CD4-positive, alpha-beta T cell (primary cell): ENCODE measurements at regions of chr17 and their contacts with region 1.

Region 1: DNA sequence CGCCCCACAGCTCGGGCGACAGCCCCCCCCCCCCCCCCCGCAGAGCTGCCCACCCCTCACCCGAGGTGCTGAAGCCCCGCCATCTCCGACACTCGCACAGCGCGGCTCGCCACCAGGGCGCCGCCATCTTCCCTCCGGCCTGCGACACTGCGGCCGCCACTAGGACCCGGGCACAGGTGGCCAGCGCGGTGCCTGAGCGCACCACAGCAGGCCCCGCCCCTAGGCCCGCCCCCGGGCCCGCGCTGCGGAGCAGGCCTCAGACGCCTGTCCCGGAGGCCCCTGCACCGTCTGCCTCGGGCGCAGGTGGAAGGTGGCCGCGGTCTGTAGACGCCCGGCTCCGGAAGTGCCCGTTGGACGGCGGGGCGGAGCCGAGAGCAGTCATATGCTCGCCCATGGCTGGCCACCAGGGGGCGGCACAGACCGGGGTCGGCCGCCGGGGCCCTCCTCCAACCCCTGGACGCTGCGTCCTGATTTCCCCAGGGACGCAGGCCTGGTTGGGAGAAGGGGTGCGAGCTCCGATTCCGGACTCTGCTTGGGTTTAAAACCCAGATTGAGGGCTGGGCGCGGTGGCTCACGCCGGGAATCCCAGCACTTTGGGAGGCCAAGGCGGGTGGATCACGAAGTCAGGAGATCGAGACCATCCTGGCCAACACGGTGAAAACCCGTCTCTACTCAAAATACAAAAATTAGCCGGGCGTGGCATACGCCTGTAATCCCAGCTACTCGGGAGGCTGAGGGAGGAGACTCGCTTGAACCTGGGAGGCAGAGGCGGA is at the start of gene MRPL38:
- DNase-seq: peak; percentile 82 to 97 (median 92)
- ATAC-seq: peak; percentile 95
- H3K4me3 ChIP-seq: peak within 1 kb of the TSS; percentile 82
- H3K4me3 Mint-ChIP-seq: peak within 1 kb of the TSS; percentile 94
- H3K27ac ChIP-seq: peak within 1 kb of the TSS; percentile 73 to 76
- H3K27ac Mint-ChIP-seq: peak within 1 kb of the TSS; percentile 85
- H3K4me1 ChIP-seq: peaks cover 25% of the 10 kb centered on the region
- H3K4me1 Mint-ChIP-seq: no peaks in the 10 kb centered on the region
- H3K27me3 ChIP-seq: no peaks in the 10 kb centered on the region
- H3K27me3 Mint-ChIP-seq: no peaks in the 10 kb centered on the region
- CTCF ChIP-seq: peak; percentile 99
- total RNA-seq, gene MRPL38: 146 to 147 TPM

Region 2: DNA sequence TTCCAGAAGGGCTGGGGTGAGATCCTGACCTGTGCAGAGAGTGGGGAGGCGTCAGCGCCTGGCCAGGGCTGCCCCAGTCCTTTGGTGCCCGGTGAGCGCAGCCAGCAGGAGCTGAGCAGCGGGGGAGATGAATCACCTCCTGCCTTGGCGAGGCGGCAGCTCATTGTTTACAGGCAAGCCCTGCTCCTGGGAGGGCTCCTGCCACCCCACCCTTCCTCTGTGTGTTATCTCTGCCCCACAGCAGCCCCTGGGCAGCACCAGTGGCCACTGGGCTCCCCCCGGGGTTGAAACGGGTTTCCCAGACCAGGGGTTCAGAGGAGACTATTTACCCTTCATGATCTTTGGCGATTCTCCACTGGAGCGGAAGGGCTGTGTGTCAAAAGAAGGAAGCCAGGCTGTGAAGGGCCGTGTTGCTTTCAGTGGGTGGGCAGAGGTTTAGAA is 197.8 kb before region 1 on chr17:
- CTCF ChIA-PET with region 1: no interaction called
- POLR2A ChIA-PET with region 1: no interaction called
- intact Hi-C with region 1: no loop called
- DNase-seq: no peak
- ATAC-seq: peak; percentile 14
- H3K4me3 ChIP-seq: no peak overlapping the region
- H3K4me3 Mint-ChIP-seq: peak overlapping the region; percentile 15
- H3K27ac ChIP-seq: no peak overlapping the region
- H3K27ac Mint-ChIP-seq: peak overlapping the region; percentile 37
- H3K4me1 ChIP-seq: no peaks in the 10 kb centered on the region
- H3K4me1 Mint-ChIP-seq: no peaks in the 10 kb centered on the region
- H3K27me3 ChIP-seq: no peaks in the 10 kb centered on the region
- H3K27me3 Mint-ChIP-seq: no peaks in the 10 kb centered on the region
- CTCF ChIP-seq: no peak

Region 3: DNA sequence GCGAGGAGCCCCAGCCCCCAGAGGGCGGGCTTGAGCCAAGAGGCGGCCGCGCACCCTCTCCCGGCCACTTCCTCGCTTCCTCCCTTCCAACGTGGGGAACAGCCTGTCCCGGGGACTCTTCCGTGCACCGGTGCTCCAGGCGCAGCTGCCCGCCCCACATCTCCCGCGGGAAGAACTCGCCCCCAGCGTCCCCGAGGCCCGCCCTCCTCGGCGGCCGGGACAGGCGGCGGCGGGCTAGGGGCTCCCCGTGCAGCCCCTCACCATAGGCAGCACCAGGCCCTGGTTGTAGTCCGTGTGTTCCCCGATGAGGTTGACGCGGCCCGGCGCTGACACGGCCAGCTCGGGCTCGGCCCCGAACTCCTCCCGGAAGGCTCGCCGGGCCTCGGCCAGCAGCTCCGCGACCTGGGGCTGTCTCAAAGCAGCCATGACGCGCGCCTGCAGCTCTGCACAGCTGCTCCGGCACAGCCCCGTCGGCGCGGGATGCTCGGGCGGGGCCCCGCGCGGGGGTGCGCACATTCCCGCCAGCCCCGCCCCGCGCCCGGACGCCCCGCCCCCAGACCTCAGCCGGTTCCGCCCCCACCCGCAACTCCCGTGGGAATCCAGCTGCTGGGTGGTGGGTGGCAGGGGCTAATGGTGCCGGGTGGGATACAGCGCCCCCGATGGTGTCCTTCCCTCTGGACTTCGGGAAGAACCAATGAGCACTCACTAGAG is 140.1 kb before region 1 on chr17 and contains the start of gene GALK1:
- CTCF ChIA-PET with region 1: no interaction called
- POLR2A ChIA-PET with region 1: no interaction called
- intact Hi-C with region 1: loop called in 1 of 2 experiments (anchors 5 kb)
- DNase-seq: peak; percentile 58 to 89 (median 70)
- ATAC-seq: peak; percentile 95
- H3K4me3 ChIP-seq: peak within 1 kb of the TSS; percentile 65
- H3K4me3 Mint-ChIP-seq: peak within 1 kb of the TSS; percentile 74
- H3K27ac ChIP-seq: no peak within 1 kb of the TSS
- H3K27ac Mint-ChIP-seq: peak within 1 kb of the TSS; percentile 44
- H3K4me1 ChIP-seq: peaks cover 24% of the 10 kb centered on the region
- H3K4me1 Mint-ChIP-seq: peaks cover 16% of the 10 kb centered on the region
- H3K27me3 ChIP-seq: no peaks in the 10 kb centered on the region
- H3K27me3 Mint-ChIP-seq: no peaks in the 10 kb centered on the region
- CTCF ChIP-seq: peak; percentile 27
- total RNA-seq, gene GALK1: 5.9 to 6.0 TPM

Region 4: DNA sequence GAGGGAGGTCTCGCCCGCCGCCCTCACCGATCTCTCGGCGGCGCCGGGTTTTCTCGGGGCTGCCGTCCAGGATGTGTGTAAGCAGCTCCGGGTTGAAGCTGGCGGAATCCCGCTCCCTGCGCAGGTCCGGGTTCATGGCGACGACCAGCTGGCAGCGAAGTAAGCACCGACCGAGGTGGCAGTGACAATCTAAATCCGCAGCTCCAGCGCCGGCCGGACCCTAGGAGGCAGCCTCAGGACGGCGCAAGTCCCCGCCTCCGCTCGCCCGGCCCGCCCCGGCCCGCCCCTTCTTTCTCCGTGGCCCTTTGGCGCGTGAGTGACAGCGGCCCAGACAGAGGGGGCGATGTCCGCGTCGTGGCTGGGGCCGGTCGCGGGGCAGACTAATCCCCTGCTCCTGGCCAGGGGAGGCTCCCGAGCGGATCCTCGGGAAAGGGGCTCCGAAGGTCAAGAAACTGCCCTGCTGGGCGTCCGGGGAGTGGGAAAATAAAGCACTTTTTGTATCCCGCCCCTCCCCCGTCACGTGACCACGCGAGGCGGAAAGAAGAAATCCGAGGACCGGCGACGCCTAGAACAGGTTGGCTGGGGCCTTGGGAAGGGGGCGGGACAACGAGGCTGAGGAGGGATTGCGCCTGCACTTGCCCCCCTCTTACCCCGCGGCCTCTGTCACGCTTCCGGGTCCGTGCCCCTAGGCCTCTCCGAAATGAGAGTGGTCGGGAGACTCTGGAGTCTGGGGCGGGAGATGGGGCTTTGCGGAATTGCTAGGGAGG is 74.2 kb after region 1 on chr17 and contains the starts of genes ACOX1 and TEN1:
- CTCF ChIA-PET with region 1: no interaction called
- POLR2A ChIA-PET with region 1: no interaction called
- intact Hi-C with region 1: loop called (anchors 1 kb)
- DNase-seq: peak; percentile 89 to 97 (median 94)
- ATAC-seq: peak; percentile 92
- H3K4me3 ChIP-seq: peak within 1 kb of the TSS; percentile 99
- H3K4me3 Mint-ChIP-seq: peak within 1 kb of the TSS; percentile 95
- H3K27ac ChIP-seq: peak within 1 kb of the TSS; percentile 91 to 94
- H3K27ac Mint-ChIP-seq: peak within 1 kb of the TSS; percentile 100
- H3K4me1 ChIP-seq: peaks cover 19% of the 10 kb centered on the region
- H3K4me1 Mint-ChIP-seq: peaks cover 51% of the 10 kb centered on the region
- H3K27me3 ChIP-seq: no peaks in the 10 kb centered on the region
- H3K27me3 Mint-ChIP-seq: no peaks in the 10 kb centered on the region
- CTCF ChIP-seq: no peak
- total RNA-seq, gene ACOX1: 14.5 to 17.9 TPM
- total RNA-seq, gene TEN1: 13.0 to 13.8 TPM

Region 5: GRCh38 chr17:76103274-76104139 is 198.6 kb after region 1 on chr17 and contains the start of gene EXOC7:
- CTCF ChIA-PET with region 1: no interaction called
- POLR2A ChIA-PET with region 1: no interaction called
- intact Hi-C with region 1: loop called in 1 of 2 experiments (anchors 2 kb)
- DNase-seq: peak; percentile 86 to 97 (median 92)
- ATAC-seq: peak; percentile 94
- H3K4me3 ChIP-seq: peak within 1 kb of the TSS; percentile 85
- H3K4me3 Mint-ChIP-seq: peak within 1 kb of the TSS; percentile 98
- H3K27ac ChIP-seq: peak within 1 kb of the TSS; percentile 68 to 82
- H3K27ac Mint-ChIP-seq: peak within 1 kb of the TSS; percentile 90
- H3K4me1 ChIP-seq: peaks cover 32% of the 10 kb centered on the region
- H3K4me1 Mint-ChIP-seq: peaks cover 38% of the 10 kb centered on the region
- H3K27me3 ChIP-seq: no peaks in the 10 kb centered on the region
- H3K27me3 Mint-ChIP-seq: no peaks in the 10 kb centered on the region
- CTCF ChIP-seq: no peak
- total RNA-seq, gene EXOC7: 88.1 to 90.6 TPM

Region 6: DNA sequence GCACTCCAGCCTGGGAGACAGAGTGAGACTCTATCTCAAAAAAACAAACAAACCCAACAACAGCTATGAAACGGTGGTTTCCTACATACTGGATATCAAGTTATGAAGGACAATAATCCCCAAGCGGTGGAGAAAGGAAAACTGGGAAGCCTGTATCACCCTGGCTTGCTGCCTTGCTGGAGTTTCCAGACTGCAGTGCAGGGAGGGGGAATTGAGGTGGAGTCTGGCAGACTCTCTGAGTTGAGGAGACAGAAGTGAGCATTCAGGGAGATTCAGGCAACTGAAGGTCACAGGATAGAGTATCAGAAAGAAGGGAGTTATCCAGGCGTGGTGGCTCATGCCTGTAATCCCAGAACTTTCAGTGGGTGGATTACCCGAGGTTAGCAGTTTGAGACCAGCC is 391.3 kb after region 1 on chr17:
- CTCF ChIA-PET with region 1: no interaction called
- POLR2A ChIA-PET with region 1: no interaction called
- intact Hi-C with region 1: loop called (anchors 2 to 10 kb)
- DNase-seq: no peak
- ATAC-seq: no peak
- H3K4me3 ChIP-seq: no peak overlapping the region
- H3K4me3 Mint-ChIP-seq: no peak overlapping the region
- H3K27ac ChIP-seq: no peak overlapping the region
- H3K27ac Mint-ChIP-seq: no peak overlapping the region
- H3K4me1 ChIP-seq: peaks cover 2% of the 10 kb centered on the region
- H3K4me1 Mint-ChIP-seq: peaks cover 4% of the 10 kb centered on the region
- H3K27me3 ChIP-seq: no peaks in the 10 kb centered on the region
- H3K27me3 Mint-ChIP-seq: no peaks in the 10 kb centered on the region
- CTCF ChIP-seq: no peak

Region 7: GRCh38 chr17:76307299-76307965 is 402.5 kb after region 1 on chr17:
- CTCF ChIA-PET with region 1: no interaction called
- POLR2A ChIA-PET with region 1: no interaction called
- intact Hi-C with region 1: no loop called
- DNase-seq: no peak
- ATAC-seq: no peak
- H3K4me3 ChIP-seq: no peak overlapping the region
- H3K4me3 Mint-ChIP-seq: no peak overlapping the region
- H3K27ac ChIP-seq: no peak overlapping the region
- H3K27ac Mint-ChIP-seq: no peak overlapping the region
- H3K4me1 ChIP-seq: no peaks in the 10 kb centered on the region
- H3K4me1 Mint-ChIP-seq: no peaks in the 10 kb centered on the region
- H3K27me3 ChIP-seq: no peaks in the 10 kb centered on the region
- H3K27me3 Mint-ChIP-seq: no peaks in the 10 kb centered on the region
- CTCF ChIP-seq: no peak